Spleen (tissue), 13 donors: ENCODE measurements at regions of chr13 and their contacts with region 1.

Region 1: DNA sequence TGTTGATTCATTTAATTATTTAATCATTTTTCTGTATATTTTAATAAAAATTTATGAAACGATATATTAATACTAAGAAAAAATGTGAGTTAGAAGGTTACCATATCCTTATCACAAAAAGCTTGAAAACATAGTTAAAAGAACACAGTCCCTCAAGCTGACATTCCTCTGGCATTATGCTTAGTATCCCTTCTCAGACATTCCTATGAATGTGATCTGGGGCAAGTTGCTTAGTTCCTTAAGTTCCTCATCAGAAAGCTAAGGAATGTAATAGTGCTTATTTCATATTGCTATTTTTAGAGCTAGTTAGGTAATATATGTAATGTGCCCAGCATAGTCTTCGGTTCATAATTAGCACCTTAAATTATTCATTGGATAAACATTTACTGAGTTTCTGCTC is 122.8 kb downstream of the MTUS2 start:
- DNase-seq: no peak
- H3K4me3 ChIP-seq: no peak overlapping the region
- H3K27ac ChIP-seq: no peak overlapping the region
- H3K4me1 ChIP-seq: no peaks in the 10 kb centered on the region
- H3K27me3 ChIP-seq: peaks cover 0 to 6% (median 0%) of the 10 kb centered on the region in 7 donors
- CTCF ChIP-seq: no peak
- POLR2A ChIP-seq: no peak

Region 2: DNA sequence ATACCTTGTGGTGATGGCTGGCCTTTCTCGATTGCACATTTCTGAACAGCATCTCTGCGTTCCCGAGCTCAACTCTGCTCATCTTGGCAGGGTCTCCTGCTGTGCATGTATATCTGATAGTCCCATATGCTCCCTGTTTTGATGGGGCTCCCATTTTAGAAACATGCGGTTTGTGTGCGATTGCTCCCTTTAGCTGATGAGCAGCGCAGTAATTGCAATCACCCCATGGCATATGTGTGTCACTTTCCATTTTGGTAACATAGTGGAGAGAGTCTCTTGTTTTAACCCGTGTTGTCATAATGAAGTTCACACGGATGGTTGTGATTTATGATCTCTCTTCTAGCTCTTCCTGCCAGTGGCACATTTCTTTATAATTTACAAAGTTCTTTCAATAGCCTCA is 21.9 kb after region 1 on chr13:
- intact Hi-C with region 1: loop called (anchors 2 kb)
- DNase-seq: no peak
- H3K4me3 ChIP-seq: no peak overlapping the region
- H3K27ac ChIP-seq: no peak overlapping the region
- H3K4me1 ChIP-seq: no peaks in the 10 kb centered on the region
- H3K27me3 ChIP-seq: no peaks in the 10 kb centered on the region
- CTCF ChIP-seq: no peak
- POLR2A ChIP-seq: no peak